Common myeloid progenitor, CD34-positive (primary cell): ENCODE measurements at regions of chr7 and their contacts with region 1.

Region 1: DNA sequence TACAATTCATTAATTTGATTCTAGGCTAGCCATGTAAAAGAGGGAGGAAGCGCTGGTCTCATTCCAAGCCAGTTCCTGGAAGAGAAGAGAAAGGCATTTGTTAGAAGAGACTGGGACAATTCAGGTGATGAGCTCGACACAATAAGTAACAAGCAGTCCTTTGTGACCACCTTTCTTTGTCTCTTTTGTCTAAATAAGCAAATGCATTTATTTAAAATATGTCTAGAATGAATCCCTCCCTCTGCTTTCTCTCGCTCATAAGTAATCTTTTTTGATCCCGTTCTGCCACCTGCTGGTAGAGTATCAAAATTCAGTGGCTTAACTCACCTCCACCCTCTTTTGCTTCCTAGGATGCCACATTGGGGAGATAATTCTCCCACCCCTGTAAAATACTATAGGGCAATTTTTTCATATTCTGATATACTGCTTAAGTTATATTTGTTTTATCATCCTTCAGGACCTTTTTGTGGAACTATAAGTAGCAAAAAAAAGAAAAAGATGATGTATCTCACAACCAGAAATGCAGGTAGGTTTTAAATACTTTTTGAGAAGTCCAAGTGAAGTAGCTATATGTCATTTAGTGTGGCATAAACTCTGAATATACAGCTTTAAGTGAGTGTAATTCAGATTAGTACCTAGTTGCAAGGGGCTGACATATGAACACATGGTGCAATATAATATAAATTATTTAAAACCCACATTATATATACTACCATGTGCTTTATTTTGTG is 91.5 kb downstream of the GSDME start:
- DNase-seq: peak; percentile 60 to 76 (median 67)
- H3K4me3 ChIP-seq: no peak overlapping the region
- H3K27ac ChIP-seq: no peak overlapping the region
- H3K4me1 ChIP-seq: peaks cover 0 to 8% (median 2%) of the 10 kb centered on the region in 4 experiments
- H3K27me3 ChIP-seq: no peaks in the 10 kb centered on the region

Region 2: GRCh38 chr7:24290004-24290641 is 375.6 kb before region 1 on chr7:
- CTCF ChIA-PET with region 1: interaction called, 13 read pairs
- POLR2A ChIA-PET with region 1: no interaction called
- DNase-seq: peak; percentile 76 to 82 (median 82)
- H3K4me3 ChIP-seq: no peak overlapping the region
- H3K27ac ChIP-seq: no peak overlapping the region
- H3K4me1 ChIP-seq: peaks cover 0 to 6% (median 2%) of the 10 kb centered on the region in 4 experiments
- H3K27me3 ChIP-seq: peaks cover 10 to 51% (median 28%) of the 10 kb centered on the region in 5 experiments

Region 3: GRCh38 chr7:24572997-24573625 is 92.6 kb before region 1 on chr7 and contains the start of gene PALS2:
- CTCF ChIA-PET with region 1: interaction called, 10 read pairs
- POLR2A ChIA-PET with region 1: no interaction called
- DNase-seq: peak; percentile 68 to 89 (median 81)
- H3K4me3 ChIP-seq: peak within 1 kb of the TSS; percentile 67 to 97 (median 88)
- H3K27ac ChIP-seq: peak within 1 kb of the TSS in 1 of 2 experiments; percentile 62
- H3K4me1 ChIP-seq: peaks cover 9 to 33% (median 22%) of the 10 kb centered on the region in 4 experiments
- H3K27me3 ChIP-seq: peaks cover 0 to 9% (median 0%) of the 10 kb centered on the region in 5 experiments

Region 4: GRCh38 chr7:24611130-24611529 is 54.6 kb before region 1 on chr7:
- CTCF ChIA-PET with region 1: no interaction called
- POLR2A ChIA-PET with region 1: no interaction called
- DNase-seq: no peak
- H3K4me3 ChIP-seq: no peak overlapping the region
- H3K27ac ChIP-seq: no peak overlapping the region
- H3K4me1 ChIP-seq: peaks cover 0 to 11% (median 6%) of the 10 kb centered on the region in 4 experiments
- H3K27me3 ChIP-seq: no peaks in the 10 kb centered on the region

Region 5: GRCh38 chr7:24653316-24654085 is 12.2 kb before region 1 on chr7:
- CTCF ChIA-PET with region 1: interaction called, 24 read pairs
- POLR2A ChIA-PET with region 1: no interaction called
- DNase-seq: peak; percentile 45 to 88 (median 76)
- H3K4me3 ChIP-seq: peak overlapping the region in 6 of 7 experiments; percentile 50 to 82 (median 66)
- H3K27ac ChIP-seq: peak overlapping the region; percentile 71 to 89
- H3K4me1 ChIP-seq: peaks cover 0 to 13% (median under 1%) of the 10 kb centered on the region in 4 experiments
- H3K27me3 ChIP-seq: no peaks in the 10 kb centered on the region